ENCODE measurements at regions of chr6 and their contacts with region 1.

Region 1: DNA sequence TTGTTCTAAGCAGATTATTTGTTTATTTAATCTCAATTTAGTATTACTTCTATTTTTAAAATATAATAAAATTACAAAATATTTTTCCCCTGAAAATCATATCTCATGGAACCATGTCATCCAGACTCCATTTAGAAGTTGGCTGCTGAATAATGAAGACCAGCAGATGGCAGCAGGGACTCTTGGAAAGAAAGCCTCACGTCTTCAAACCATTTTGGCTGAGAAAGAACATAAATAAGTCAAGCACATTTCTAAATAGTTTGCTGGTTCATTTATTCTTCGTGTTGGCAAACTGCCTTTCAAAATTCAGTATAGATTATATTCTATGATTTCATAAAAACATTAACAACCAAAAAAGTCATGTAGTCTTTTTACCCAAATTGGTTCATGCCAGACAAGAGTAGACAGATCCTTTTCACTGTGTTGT is 71.7 kb downstream of the RCAN2 start:
- DNase-seq: peak; percentile 42
- ATAC-seq: peak; percentile 50 to 54

Region 2: GRCh38 chr6:46347669-46348068 is 71.9 kb before region 1 on chr6:
- intact Hi-C with region 1: no loop called
- DNase-seq: no peak
- ATAC-seq: no peak

Region 3: GRCh38 chr6:46491628-46492547 is 72.3 kb after region 1 on chr6:
- intact Hi-C with region 1: loop called (anchors 5 kb)
- DNase-seq: peak; percentile 58
- ATAC-seq: peak; percentile 89 to 91

Region 4: GRCh38 chr6:46626228-46626909 is 206.8 kb after region 1 on chr6:
- intact Hi-C with region 1: loop called (anchors 2 to 5 kb)
- DNase-seq: no peak
- ATAC-seq: peak in 1 of 2 donors; percentile 56

Region 5: DNA sequence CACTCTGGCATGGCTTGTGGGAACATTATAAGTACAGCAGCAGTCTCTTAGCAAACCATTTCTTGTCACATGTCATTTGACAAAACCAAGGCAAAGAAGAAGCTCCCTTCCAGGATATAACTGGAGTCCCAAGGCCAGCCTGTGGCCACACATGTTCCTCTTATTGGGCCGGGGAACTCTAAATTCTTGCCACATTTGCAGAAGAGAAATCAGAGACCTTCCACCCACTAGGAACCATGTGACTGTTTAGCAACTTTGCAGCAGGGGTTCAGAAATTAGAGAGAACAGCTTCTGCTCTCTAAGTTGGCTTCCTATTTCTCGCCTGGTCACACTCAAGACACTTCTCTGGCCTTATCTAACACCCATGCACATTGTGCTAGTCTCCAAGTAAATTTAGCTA is 353.2 kb after region 1 on chr6:
- intact Hi-C with region 1: loop called in 1 of 2 experiments (anchors 10 kb)
- DNase-seq: no peak
- ATAC-seq: peak; percentile 75 to 86

Measured in left cardiac atrium (tissue), 4 donors.